ENCODE measurements at regions of chr15 and their contacts with region 1.

Region 1: DNA sequence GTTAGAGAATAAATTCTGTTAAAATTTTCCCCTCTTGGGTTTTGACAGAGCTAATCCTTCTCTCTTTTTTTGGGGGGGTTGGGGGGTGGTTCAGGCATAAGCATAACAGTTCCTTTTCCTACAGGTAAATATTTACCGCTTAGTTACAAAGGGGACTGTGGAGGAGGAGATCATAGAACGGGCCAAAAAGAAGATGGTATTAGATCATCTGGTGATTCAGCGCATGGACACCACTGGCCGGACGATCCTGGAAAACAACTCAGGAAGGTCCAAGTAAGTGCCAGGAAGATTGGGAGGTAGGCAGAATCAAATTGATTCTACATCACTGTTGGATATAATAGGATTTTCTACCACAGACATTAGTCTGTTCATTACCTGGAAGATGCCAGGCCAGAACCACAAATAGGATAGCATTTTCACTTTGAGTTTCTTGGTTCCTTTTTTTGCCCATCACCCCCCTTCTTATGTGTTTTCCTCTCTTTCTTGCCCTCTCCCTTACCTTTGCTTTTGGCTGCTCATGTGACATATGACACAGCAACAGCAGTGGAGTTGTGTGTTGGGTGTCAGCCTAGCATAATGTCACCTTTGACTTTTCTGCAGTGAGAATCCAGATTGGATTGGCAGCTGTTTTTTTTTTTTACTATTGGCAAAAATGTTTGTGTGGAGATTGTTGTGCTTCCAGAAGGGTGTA is 79.0 kb downstream of the CHD2 start:
- DNase-seq: no peak
- ATAC-seq: no peak
- H3K4me3 ChIP-seq: no peak overlapping the region
- H3K27ac ChIP-seq: no peak overlapping the region
- H3K4me1 ChIP-seq: peaks cover 0 to 25% (median 5%) of the 10 kb centered on the region in 9 donors
- H3K27me3 ChIP-seq: no peaks in the 10 kb centered on the region
- CTCF ChIP-seq: no peak

Region 2: DNA sequence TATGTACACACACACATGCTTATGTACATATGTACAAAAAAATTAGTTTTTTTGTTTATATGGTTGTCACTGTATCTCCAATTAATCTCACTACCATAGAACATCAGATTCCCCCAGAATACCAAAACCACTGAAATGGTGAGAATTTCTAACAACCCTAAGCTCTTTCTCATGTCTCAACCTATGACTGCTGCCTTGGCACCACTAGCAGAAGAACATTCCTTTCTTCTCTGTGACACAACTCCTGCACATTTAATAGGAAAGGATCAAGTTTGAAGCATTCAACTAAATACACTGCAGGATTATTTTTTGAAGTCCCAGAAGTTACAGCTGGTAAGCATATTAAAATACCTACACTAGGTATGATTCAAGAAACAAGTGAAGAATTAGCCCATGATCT is 433.2 kb before region 1 on chr15:
- intact Hi-C with region 1: no loop called
- DNase-seq: no peak
- ATAC-seq: no peak
- H3K4me3 ChIP-seq: no peak overlapping the region
- H3K27ac ChIP-seq: no peak overlapping the region
- H3K4me1 ChIP-seq: no peaks in the 10 kb centered on the region
- H3K27me3 ChIP-seq: no peaks in the 10 kb centered on the region
- CTCF ChIP-seq: no peak

Region 3: GRCh38 chr15:92665100-92665555 is 314.0 kb before region 1 on chr15:
- intact Hi-C with region 1: no loop called
- DNase-seq: no peak
- ATAC-seq: peak in 7 of 8 donors; percentile 58 to 81 (median 63)
- H3K4me3 ChIP-seq: peak overlapping the region in 6 of 10 donors; percentile 7 to 28 (median 21)
- H3K27ac ChIP-seq: peak overlapping the region in 6 of 10 donors; percentile 23 to 65 (median 49)
- H3K4me1 ChIP-seq: peaks cover 8 to 46% (median 36%) of the 10 kb centered on the region in 9 donors
- H3K27me3 ChIP-seq: no peaks in the 10 kb centered on the region
- CTCF ChIP-seq: no peak

Region 4: GRCh38 chr15:92942706-92943105 is 36.5 kb before region 1 on chr15:
- intact Hi-C with region 1: loop called in 2 of 10 experiments (anchors 5 to 10 kb)
- DNase-seq: no peak
- ATAC-seq: no peak
- H3K4me3 ChIP-seq: no peak overlapping the region
- H3K27ac ChIP-seq: no peak overlapping the region
- H3K4me1 ChIP-seq: peaks cover 0 to 7% (median 0%) of the 10 kb centered on the region in 9 donors
- H3K27me3 ChIP-seq: no peaks in the 10 kb centered on the region
- CTCF ChIP-seq: peak in 2 of 9 donors; percentile 6 to 11

Region 5: DNA sequence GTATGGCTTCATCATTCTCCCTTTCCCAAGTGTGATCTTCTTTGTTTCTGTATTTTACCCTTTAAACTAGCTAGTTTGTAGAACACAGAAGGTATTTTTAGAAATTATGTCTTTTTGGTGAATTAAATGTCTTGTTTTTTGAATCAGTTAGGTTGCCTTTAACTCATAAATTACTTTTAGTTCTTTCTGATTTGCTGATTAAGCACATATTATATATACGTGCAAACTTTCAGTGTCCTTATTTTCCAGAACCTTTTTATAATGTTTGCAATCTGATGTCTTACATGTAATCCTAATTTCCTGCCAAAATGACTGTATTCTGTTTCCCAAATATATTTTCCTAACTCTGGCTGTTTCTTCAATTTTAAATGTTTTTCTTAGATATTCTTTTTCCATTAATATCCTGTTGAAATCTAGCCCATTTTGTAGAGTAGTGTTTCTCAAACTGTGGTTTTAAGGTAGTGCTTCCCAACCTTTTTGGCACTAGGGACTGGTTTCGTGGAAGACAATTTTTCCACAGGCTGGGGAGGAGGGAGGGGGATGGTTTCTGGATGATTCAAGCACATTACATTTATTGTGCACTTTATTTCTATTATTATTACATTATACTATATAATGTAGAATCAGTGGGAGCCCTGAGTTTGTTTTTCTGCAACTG is 27.2 kb before region 1 on chr15:
- intact Hi-C with region 1: loop called in 1 of 10 experiments (anchors 1 kb)
- DNase-seq: no peak
- ATAC-seq: no peak
- H3K4me3 ChIP-seq: no peak overlapping the region
- H3K27ac ChIP-seq: peak overlapping the region in 1 of 10 donors; percentile 34
- H3K4me1 ChIP-seq: peaks cover 0 to 12% (median under 1%) of the 10 kb centered on the region in 9 donors
- H3K27me3 ChIP-seq: no peaks in the 10 kb centered on the region
- CTCF ChIP-seq: no peak

Region 6: DNA sequence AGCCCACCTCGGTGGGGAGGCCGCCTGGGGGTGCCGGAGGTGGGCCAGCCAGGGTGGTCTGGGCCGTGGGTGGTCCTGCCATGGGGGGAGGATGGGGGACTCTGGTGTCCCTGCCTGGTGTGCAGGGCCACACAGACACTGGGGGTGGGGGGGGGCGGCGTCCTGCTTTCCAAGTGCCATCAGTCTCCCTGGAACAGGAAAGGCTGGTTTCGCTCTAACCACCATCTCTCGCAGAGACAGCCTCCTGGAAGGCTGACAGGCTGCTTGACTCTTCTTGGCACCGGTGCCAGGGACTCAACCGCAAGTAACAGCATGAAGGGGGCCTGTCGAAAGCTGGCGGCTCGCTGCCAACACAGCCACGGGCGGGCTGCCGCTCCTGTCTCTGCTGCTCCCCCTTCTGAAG is 69.6 kb after region 1 on chr15:
- intact Hi-C with region 1: no loop called
- DNase-seq: no peak
- ATAC-seq: no peak
- H3K4me3 ChIP-seq: no peak overlapping the region
- H3K27ac ChIP-seq: no peak overlapping the region
- H3K4me1 ChIP-seq: peaks cover 0 to 19% (median 0%) of the 10 kb centered on the region in 9 donors
- H3K27me3 ChIP-seq: no peaks in the 10 kb centered on the region
- CTCF ChIP-seq: no peak

Measured in heart right ventricle (tissue), 16 donors.